PC-9 (cell line): ENCODE measurements at regions of chr9 and their contacts with region 1.

Region 1: GRCh38 chr9:32627394-32627944 is 8.0 kb downstream of the TAF1L start:
- DNase-seq: peak in 1 of 2 experiments; percentile 81
- H3K4me3 ChIP-seq: no peak overlapping the region
- H3K27ac ChIP-seq: peak overlapping the region; percentile 54
- H3K4me1 ChIP-seq: peaks cover 17% of the 10 kb centered on the region
- H3K27me3 ChIP-seq: no peaks in the 10 kb centered on the region
- CTCF ChIP-seq: no peak

Region 2: DNA sequence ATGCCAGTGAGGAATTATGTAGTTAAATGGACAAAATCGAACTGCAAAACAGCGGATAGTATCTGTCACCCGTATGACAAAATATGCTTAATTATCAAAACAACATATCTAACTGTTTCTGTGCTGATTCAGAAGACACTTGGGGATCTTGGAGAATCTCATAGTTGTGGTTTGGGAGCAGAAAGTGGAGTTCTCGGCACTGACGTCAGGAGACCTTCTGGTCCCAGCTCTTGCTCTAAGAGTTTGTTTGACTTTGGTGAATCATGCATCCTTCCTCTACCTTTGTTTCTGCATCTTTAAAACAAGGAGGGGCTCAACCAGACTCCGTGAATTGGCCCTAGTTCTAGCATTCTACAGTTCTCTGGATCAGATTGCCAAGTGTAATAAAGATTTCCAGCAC is 45.0 kb after region 1 on chr9:
- CTCF ChIA-PET with region 1: no interaction called
- POLR2A ChIA-PET with region 1: interaction called, 14 read pairs
- intact Hi-C with region 1: no loop called
- DNase-seq: peak; percentile 30 to 81
- H3K4me3 ChIP-seq: no peak overlapping the region
- H3K27ac ChIP-seq: peak overlapping the region; percentile 66
- H3K4me1 ChIP-seq: peaks cover 15% of the 10 kb centered on the region
- H3K27me3 ChIP-seq: no peaks in the 10 kb centered on the region
- CTCF ChIP-seq: no peak